ENCODE measurements at regions of chr22 and their contacts with region 1.

Region 1: GRCh38 chr22:30381264-30381663 is 5.9 kb downstream of the RNF215 start:
- DNase-seq: no peak
- ATAC-seq: no peak
- H3K4me3 ChIP-seq: no peak overlapping the region
- H3K27ac ChIP-seq: peak overlapping the region in 1 of 10 donors; percentile 68
- H3K4me1 ChIP-seq: peaks cover 0 to 17% (median 7%) of the 10 kb centered on the region in 9 donors
- H3K27me3 ChIP-seq: no peaks in the 10 kb centered on the region
- CTCF ChIP-seq: no peak

Region 2: GRCh38 chr22:30104501-30105156 is 276.6 kb before region 1 on chr22:
- intact Hi-C with region 1: loop called in 6 of 10 experiments (anchors 2 to 5 kb)
- DNase-seq: no peak
- ATAC-seq: no peak
- H3K4me3 ChIP-seq: no peak overlapping the region
- H3K27ac ChIP-seq: no peak overlapping the region
- H3K4me1 ChIP-seq: peaks cover 0 to 5% (median 0%) of the 10 kb centered on the region in 9 donors
- H3K27me3 ChIP-seq: peaks cover 0 to 31% (median 18%) of the 10 kb centered on the region in 7 donors
- CTCF ChIP-seq: no peak

Region 3: DNA sequence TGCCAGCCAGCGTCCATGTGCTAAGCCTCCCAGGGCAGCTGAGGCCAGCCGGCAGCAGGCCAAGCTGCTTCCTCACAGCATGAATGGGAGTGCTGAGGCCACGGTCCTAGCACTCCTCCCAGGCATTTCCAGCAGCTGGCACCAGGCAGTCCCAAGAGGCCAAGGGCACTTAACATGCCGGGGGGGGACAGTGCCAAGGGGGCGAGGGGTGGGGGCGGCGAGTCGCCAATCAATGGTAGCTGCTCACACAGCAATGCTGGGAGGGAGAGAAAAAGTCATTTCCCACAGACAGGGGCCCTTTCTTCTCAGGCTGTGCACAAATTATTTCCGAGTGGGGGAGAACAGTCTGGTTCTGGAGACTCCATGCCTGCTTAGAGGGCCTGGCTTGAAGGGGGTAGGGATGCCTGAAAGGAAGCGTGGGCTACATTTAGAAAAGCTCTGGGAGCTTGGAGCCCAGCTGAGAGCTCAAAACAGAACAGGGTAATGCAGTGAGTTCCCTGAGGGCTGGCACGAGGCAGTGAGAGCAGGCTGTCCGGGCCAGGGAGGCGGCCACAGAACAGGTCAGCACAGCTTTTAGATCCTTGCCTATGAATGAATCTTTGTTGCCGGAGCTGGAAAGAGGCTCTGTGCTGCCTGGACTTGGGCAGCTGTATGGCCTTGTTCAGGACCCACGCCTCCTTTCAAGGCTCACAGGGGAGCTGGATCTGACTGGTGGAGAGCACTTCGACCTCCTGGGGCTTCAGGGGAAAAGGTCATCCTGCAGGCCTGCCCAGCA is 40.2 kb before region 1 on chr22:
- intact Hi-C with region 1: loop called in 2 of 10 experiments (anchors 5 kb)
- DNase-seq: peak; percentile 74 to 79
- ATAC-seq: peak; percentile 81 to 94 (median 87)
- H3K4me3 ChIP-seq: no peak overlapping the region
- H3K27ac ChIP-seq: peak overlapping the region in 8 of 10 donors; percentile 21 to 72 (median 57)
- H3K4me1 ChIP-seq: peaks cover 3 to 65% (median 35%) of the 10 kb centered on the region in 9 donors
- H3K27me3 ChIP-seq: no peaks in the 10 kb centered on the region
- CTCF ChIP-seq: no peak

Region 4: DNA sequence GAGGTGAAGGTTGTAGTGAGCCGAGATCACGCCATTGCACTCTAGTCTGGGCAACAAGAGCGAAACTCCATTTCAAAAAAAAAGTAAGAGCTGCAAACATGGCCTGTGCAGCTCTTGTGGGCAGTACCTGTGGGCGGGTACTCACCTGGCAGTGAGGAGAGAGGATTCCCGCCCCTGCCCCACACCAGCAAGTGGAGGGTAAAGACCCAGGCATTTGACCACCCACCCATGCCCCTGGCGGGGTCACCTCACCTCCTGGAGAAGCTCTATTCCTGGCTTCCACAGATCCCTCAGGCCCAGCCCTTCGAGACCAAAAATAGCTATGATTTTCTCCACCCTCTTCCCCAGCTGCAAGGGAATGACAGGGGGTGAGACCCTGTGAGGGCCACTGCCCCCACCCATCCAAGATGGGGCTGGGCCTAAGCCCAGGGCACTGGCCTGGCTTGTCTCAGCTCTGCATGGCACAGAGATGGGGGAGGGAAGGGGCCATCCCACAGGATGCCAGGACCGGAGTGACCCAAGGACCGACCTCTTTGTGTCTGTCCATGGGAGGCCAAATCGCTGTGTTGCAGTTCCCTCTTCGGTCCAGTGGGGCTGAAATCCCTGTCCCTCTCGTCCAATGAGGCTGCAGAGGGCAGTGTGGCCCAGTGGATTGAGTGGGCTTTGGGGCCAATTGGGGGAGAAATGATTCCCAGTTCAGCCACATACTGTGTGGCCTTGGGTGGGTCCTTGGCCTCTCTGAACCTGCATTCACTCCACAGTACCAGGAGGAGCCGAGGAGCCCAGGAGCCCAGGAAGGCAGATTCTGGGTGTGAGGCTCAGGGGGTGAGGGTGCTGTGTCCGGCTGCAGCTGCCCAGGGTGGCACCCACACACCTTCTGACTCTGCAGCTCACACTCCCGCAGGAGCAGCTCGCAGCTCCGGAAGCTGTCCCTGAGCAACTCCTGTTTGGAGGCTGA is 150.7 kb after region 1 on chr22:
- intact Hi-C with region 1: no loop called
- DNase-seq: no peak
- ATAC-seq: no peak
- H3K4me3 ChIP-seq: no peak overlapping the region
- H3K27ac ChIP-seq: no peak overlapping the region
- H3K4me1 ChIP-seq: no peaks in the 10 kb centered on the region
- H3K27me3 ChIP-seq: no peaks in the 10 kb centered on the region
- CTCF ChIP-seq: no peak

Measured in heart right ventricle (tissue), 16 donors.